ENCODE measurements at regions of chr3 and their contacts with region 1.

Region 1: GRCh38 chr3:4493014-4493940 is at the start of gene ITPR1:
- ATAC-seq: peak; percentile 90 to 98 (median 96)
- H3K4me3 ChIP-seq: peak within 1 kb of the TSS; percentile 71 to 94 (median 81)
- H3K27ac ChIP-seq: no peak within 1 kb of the TSS
- H3K4me1 ChIP-seq: peaks cover 2 to 4% of the 10 kb centered on the region in 2 donors
- total RNA-seq, gene ITPR1: 2.2 to 167 (median 12.2) TPM

Region 2: DNA sequence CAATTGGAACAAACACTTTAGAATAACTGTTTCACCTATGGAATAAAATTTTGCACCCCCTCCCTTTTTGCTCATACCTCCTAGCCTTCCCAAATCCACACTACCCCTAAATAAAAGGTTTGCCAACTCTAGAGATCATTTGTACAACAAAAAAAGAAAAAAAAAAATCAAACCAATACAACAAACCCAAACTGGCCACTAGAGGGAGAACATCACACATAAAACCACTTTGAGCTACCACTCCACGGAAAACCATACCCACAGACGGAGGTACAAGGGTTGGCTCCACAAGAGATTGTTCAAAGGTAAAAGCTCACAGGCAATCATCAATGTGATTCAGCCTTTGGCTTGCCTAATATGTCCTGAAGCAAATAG is 142.5 kb before region 1 on chr3:
- in situ Hi-C with region 1: loop called in 1 of 9 experiments (anchors 25 kb)
- ATAC-seq: peak in 5 of 8 experiments; percentile 44 to 81 (median 65)
- H3K4me3 ChIP-seq: no peak overlapping the region
- H3K27ac ChIP-seq: no peak overlapping the region
- H3K4me1 ChIP-seq: peaks cover 0 to 5% of the 10 kb centered on the region in 2 donors

Measured in motor neuron (in vitro differentiated cells).